MCF 10A (cell line): ENCODE measurements at regions of chr2 and their contacts with region 1.

Region 1: GRCh38 chr2:102235491-102235890 is 48.7 kb downstream of the IL1RL2 start:
- DNase-seq: peak; percentile 44
- H3K4me3 Mint-ChIP-seq: no peak overlapping the region
- H3K27ac Mint-ChIP-seq: no peak overlapping the region
- H3K4me1 Mint-ChIP-seq: peaks cover 5% of the 10 kb centered on the region
- H3K27me3 Mint-ChIP-seq: no peaks in the 10 kb centered on the region
- CTCF ChIP-seq: peak; percentile 24

Region 2: GRCh38 chr2:102197389-102198137 is 37.9 kb before region 1 on chr2:
- CTCF ChIA-PET with region 1: interaction called, 12 read pairs
- POLR2A ChIA-PET with region 1: no interaction called
- intact Hi-C with region 1: no loop called
- DNase-seq: no peak
- H3K4me3 Mint-ChIP-seq: no peak overlapping the region
- H3K27ac Mint-ChIP-seq: no peak overlapping the region
- H3K4me1 Mint-ChIP-seq: peaks cover 18% of the 10 kb centered on the region
- H3K27me3 Mint-ChIP-seq: no peaks in the 10 kb centered on the region
- CTCF ChIP-seq: no peak

Region 3: DNA sequence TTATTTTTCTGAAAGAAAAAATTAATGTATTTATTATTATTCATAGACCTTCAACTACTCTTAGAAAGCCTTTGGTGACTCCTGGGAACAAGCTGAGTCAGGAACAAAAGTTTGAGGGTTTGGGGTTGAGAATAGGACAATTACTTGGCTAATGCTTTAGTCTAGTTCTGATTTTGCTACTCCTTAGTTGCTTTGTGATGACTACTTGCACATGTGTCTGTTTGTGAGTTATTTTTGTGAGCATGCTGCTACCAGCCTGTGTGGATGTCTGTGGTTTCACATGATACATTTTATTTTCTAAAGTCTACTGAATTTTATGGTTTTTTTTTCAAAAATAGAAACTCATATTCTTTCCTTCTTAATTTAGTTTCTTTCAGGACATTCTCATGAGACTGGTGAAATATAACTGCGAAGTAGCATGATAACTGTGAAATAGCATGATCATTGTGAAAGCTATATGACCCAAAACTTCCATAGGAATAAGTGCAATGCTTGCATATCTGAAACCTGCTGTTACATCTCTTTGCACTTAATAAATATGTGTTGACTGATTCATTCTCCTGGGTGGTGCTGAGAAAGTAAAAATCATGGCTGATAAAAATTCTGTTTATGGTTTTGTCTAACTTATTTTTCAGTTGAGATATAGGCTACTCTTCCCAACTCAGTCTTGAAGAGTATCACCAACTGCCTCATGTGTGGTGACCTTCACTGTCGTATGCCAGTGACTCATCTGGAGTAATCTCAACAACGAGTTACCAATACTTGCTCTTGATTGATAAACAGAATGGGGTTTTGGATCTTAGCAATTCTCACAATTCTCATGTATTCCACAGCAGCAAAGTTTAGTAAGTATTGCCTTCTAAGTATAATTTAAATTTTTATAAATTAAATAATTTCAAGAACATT is 102.2 kb after region 1 on chr2:
- CTCF ChIA-PET with region 1: no interaction called
- POLR2A ChIA-PET with region 1: no interaction called
- intact Hi-C with region 1: no loop called
- DNase-seq: no peak
- H3K4me3 Mint-ChIP-seq: peak overlapping the region; percentile 58
- H3K27ac Mint-ChIP-seq: peak overlapping the region; percentile 39
- H3K4me1 Mint-ChIP-seq: peaks cover 15% of the 10 kb centered on the region
- H3K27me3 Mint-ChIP-seq: no peaks in the 10 kb centered on the region
- CTCF ChIP-seq: no peak

Region 4: DNA sequence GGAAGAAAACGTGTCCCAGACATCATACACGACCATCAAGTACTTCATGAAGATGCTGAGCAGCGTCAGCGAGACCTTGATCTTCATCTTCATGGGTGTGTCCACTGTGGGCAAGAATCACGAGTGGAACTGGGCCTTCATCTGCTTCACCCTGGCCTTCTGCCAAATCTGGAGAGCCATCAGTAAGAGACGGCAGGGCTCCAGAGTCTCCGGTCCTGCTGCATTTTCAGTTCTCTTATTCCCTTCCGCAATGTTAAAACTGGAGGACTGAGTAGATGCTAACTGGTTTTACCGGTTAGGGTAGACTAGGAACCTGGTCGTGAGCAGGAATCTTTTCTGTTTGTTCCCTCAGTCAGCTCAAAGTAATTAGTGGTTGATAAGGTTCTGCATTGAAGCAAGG is 269.8 kb after region 1 on chr2:
- CTCF ChIA-PET with region 1: no interaction called
- POLR2A ChIA-PET with region 1: no interaction called
- intact Hi-C with region 1: no loop called
- DNase-seq: no peak
- H3K4me3 Mint-ChIP-seq: no peak overlapping the region
- H3K27ac Mint-ChIP-seq: no peak overlapping the region
- H3K4me1 Mint-ChIP-seq: peaks cover 6% of the 10 kb centered on the region
- H3K27me3 Mint-ChIP-seq: no peaks in the 10 kb centered on the region
- CTCF ChIP-seq: no peak

Region 5: GRCh38 chr2:102950371-102950946 is 715.0 kb after region 1 on chr2:
- CTCF ChIA-PET with region 1: no interaction called
- POLR2A ChIA-PET with region 1: no interaction called
- intact Hi-C with region 1: no loop called
- DNase-seq: peak; percentile 34
- H3K4me3 Mint-ChIP-seq: no peak overlapping the region
- H3K27ac Mint-ChIP-seq: no peak overlapping the region
- H3K4me1 Mint-ChIP-seq: peaks cover 5% of the 10 kb centered on the region
- H3K27me3 Mint-ChIP-seq: no peaks in the 10 kb centered on the region
- CTCF ChIP-seq: no peak